ENCODE measurements at regions of chr7 and their contacts with region 1.

Region 1: DNA sequence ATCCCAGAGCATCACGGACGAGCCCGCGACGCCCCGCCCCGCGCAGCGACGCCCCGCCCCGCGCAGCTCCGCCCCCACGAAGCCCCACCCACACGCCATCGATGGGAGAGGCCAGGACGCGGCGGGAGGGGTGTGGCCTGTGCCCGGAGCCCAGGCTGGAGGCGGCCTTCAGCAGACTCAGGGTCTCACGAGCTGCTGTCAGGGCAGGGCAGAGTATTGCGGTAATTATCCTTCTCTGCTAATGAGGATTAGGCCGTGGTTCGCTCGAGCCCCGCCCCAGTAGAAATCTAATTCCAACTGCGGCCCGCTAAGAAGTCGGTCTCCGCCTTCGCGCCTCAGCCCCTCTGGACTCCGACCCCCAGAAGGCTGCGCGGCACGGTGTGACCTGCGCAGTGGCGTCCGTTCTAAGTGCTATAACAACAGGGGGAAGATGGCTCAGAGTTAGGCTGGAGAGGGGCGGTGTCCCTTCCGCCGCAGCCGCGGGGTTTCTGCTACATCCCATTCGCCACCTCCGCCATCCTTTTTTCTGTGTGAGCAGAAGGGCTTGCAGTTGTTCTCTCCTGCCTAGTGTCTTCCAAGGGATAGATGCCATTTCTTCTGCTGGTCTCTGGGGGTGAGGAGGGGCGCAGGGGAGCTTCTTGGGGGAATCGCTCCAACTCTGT is 337 bp upstream of the NT5C3A start:
- DNase-seq: peak; percentile 95
- ATAC-seq: peak; percentile 96
- H3K4me3 Mint-ChIP-seq: peak overlapping the region; percentile 95
- H3K27ac Mint-ChIP-seq: peak overlapping the region; percentile 93
- H3K4me1 Mint-ChIP-seq: peaks cover 32% of the 10 kb centered on the region
- H3K27me3 Mint-ChIP-seq: no peaks in the 10 kb centered on the region

Region 2: DNA sequence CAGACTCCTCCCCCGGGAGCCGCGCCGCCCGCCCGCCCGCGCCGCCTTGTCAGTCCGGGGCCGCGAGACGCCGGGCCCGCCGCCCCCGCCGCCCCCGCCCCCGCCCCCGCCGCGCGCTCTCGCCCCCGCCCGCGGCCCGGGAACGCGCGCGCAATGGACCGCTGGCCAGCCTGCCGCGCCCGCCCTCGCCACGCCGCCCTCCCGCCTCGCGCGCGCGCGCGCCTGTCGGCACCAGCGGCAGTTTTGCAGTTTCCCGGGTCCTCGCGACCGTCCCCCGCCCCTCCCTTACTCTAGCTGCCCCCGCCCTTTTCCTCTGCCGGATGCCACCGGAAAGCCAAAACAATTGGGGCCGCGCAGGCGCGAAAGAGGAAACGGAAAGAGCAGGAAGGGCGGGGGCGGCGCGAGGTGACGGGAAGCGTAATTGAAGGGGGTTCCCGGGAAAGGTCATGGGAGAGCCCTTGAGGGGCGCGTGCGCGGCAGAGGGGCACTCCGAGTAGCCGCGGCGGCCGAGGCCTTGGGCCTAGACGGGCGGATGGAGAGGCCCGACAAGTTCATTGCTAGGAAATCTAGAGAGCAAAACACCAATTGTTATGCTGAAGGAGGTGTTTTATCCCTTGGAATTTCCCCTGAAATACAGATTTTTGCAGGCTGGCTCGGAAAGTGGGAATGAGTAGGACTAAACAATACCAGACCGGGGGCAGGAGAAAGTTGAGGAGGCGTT is 171.0 kb before region 1 on chr7:
- CTCF ChIA-PET with region 1: no interaction called
- POLR2A ChIA-PET with region 1: interaction called, 8 read pairs
- intact Hi-C with region 1: loop called (anchors 1 to 2 kb)
- DNase-seq: peak; percentile 99
- ATAC-seq: peak; percentile 67
- H3K4me3 Mint-ChIP-seq: peak overlapping the region; percentile 94
- H3K27ac Mint-ChIP-seq: peak overlapping the region; percentile 99
- H3K4me1 Mint-ChIP-seq: peaks cover 44% of the 10 kb centered on the region
- H3K27me3 Mint-ChIP-seq: no peaks in the 10 kb centered on the region

Region 3: GRCh38 chr7:32905175-32905662 is 157.7 kb before region 1 on chr7:
- CTCF ChIA-PET with region 1: no interaction called
- POLR2A ChIA-PET with region 1: no interaction called
- intact Hi-C with region 1: loop called in 1 of 2 experiments (anchors 1 kb)
- DNase-seq: peak; percentile 84
- ATAC-seq: peak; percentile 93
- H3K4me3 Mint-ChIP-seq: peak overlapping the region; percentile 69
- H3K27ac Mint-ChIP-seq: peak overlapping the region; percentile 86
- H3K4me1 Mint-ChIP-seq: peaks cover 15% of the 10 kb centered on the region
- H3K27me3 Mint-ChIP-seq: no peaks in the 10 kb centered on the region

Region 4: DNA sequence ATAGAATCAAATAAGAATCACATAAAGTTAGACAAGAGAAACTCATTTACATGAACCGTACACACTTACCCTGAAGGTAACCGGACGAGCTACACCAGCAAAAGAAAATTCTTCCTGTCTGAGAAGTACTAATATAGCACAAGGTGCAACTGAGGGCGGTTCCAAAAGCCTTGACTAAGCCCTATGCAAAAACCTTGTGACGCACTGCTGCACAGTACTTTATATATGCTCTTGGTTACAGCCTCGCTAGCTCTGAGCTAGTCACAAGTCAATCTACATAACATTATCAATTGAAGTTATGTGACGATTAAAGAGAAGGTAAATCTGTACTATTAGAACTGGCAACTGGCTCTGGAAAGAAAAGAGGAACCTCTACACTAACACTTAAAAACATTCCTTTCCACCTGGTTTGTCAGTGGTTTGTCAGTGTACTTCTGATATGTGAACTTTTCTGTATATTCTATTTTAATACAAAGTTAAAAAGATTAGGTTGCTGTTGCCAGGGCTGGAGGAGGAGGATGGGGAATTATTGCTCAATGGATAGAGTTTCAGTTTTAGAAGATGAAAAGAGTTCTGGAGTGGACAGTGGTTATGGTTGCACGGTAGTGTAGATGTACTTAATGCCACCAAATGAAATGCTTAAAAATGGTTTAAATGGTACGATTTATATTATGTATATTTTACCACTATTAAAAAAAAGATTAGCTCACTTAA is 22.0 kb before region 1 on chr7:
- CTCF ChIA-PET with region 1: interaction called, 42 read pairs
- POLR2A ChIA-PET with region 1: interaction called, 8 read pairs
- intact Hi-C with region 1: loop called (anchors 1 to 2 kb)
- DNase-seq: peak; percentile 79
- ATAC-seq: peak; percentile 99
- H3K4me3 Mint-ChIP-seq: peak overlapping the region; percentile 66
- H3K27ac Mint-ChIP-seq: peak overlapping the region; percentile 77
- H3K4me1 Mint-ChIP-seq: peaks cover 62% of the 10 kb centered on the region
- H3K27me3 Mint-ChIP-seq: no peaks in the 10 kb centered on the region

Region 5: GRCh38 chr7:33050535-33051318 is 12.2 kb before region 1 on chr7:
- CTCF ChIA-PET with region 1: interaction called, 7 read pairs
- POLR2A ChIA-PET with region 1: interaction called, 3 read pairs
- intact Hi-C with region 1: loop called in 1 of 2 experiments (anchors 1 kb)
- DNase-seq: peak; percentile 30
- ATAC-seq: peak; percentile 60
- H3K4me3 Mint-ChIP-seq: no peak overlapping the region
- H3K27ac Mint-ChIP-seq: no peak overlapping the region
- H3K4me1 Mint-ChIP-seq: peaks cover 49% of the 10 kb centered on the region
- H3K27me3 Mint-ChIP-seq: no peaks in the 10 kb centered on the region

Region 6: GRCh38 chr7:33128990-33129805 is 66.3 kb after region 1 on chr7 and contains the start of gene BBS9:
- CTCF ChIA-PET with region 1: no interaction called
- POLR2A ChIA-PET with region 1: no interaction called
- intact Hi-C with region 1: loop called (anchors 1 to 2 kb)
- DNase-seq: peak; percentile 96
- ATAC-seq: peak; percentile 99
- H3K4me3 Mint-ChIP-seq: peak within 1 kb of the TSS; percentile 95
- H3K27ac Mint-ChIP-seq: peak within 1 kb of the TSS; percentile 89
- H3K4me1 Mint-ChIP-seq: peaks cover 16% of the 10 kb centered on the region
- H3K27me3 Mint-ChIP-seq: no peaks in the 10 kb centered on the region
- total RNA-seq, gene BBS9: 4.1 to 9.9 TPM

Measured in activated CD4-positive, alpha-beta T cell treated with anti-CD3 and anti-CD28 coated beads for 36 hours (primary cell).